Endothelial cell of umbilical vein (primary cell): ENCODE measurements at regions of chr19 and their contacts with region 1.

Region 1: GRCh38 chr19:43950834-43951645 is at the start of gene ZNF221:
- DNase-seq: peak; percentile 98
- H3K4me3 ChIP-seq: peak within 1 kb of the TSS; percentile 49 to 73 (median 55)
- H3K27ac ChIP-seq: peak within 1 kb of the TSS; percentile 4
- H3K4me1 ChIP-seq: no peaks in the 10 kb centered on the region
- H3K27me3 ChIP-seq: no peaks in the 10 kb centered on the region
- CTCF ChIP-seq: peak; percentile 41 to 60
- POLR2A ChIP-seq: no peak
- total RNA-seq, gene ZNF221: 4.2 and 6.0 TPM in 2 replicates

Region 2: GRCh38 chr19:43765109-43765876 is 185.7 kb before region 1 on chr19:
- CTCF ChIA-PET with region 1: interaction called, 3 read pairs
- POLR2A ChIA-PET with region 1: no interaction called
- dilution Hi-C with region 1: no loop called
- intact Hi-C with region 1: loop called (anchors 1 kb)
- DNase-seq: peak; percentile 68
- H3K4me3 ChIP-seq: no peak overlapping the region
- H3K27ac ChIP-seq: peak overlapping the region; percentile 61
- H3K4me1 ChIP-seq: peaks cover 17% of the 10 kb centered on the region
- H3K27me3 ChIP-seq: no peaks in the 10 kb centered on the region
- CTCF ChIP-seq: no peak
- POLR2A ChIP-seq: no peak

Region 3: GRCh38 chr19:43798546-43799409 is 152.3 kb before region 1 on chr19:
- CTCF ChIA-PET with region 1: no interaction called
- POLR2A ChIA-PET with region 1: no interaction called
- dilution Hi-C with region 1: no loop called
- intact Hi-C with region 1: no loop called
- DNase-seq: no peak
- H3K4me3 ChIP-seq: peak overlapping the region in 2 of 3 experiments; percentile 7 to 21
- H3K27ac ChIP-seq: no peak overlapping the region
- H3K4me1 ChIP-seq: peaks cover 13% of the 10 kb centered on the region
- H3K27me3 ChIP-seq: peaks cover 3 to 8% of the 10 kb centered on the region in 2 experiments
- CTCF ChIP-seq: no peak
- POLR2A ChIP-seq: no peak

Region 4: DNA sequence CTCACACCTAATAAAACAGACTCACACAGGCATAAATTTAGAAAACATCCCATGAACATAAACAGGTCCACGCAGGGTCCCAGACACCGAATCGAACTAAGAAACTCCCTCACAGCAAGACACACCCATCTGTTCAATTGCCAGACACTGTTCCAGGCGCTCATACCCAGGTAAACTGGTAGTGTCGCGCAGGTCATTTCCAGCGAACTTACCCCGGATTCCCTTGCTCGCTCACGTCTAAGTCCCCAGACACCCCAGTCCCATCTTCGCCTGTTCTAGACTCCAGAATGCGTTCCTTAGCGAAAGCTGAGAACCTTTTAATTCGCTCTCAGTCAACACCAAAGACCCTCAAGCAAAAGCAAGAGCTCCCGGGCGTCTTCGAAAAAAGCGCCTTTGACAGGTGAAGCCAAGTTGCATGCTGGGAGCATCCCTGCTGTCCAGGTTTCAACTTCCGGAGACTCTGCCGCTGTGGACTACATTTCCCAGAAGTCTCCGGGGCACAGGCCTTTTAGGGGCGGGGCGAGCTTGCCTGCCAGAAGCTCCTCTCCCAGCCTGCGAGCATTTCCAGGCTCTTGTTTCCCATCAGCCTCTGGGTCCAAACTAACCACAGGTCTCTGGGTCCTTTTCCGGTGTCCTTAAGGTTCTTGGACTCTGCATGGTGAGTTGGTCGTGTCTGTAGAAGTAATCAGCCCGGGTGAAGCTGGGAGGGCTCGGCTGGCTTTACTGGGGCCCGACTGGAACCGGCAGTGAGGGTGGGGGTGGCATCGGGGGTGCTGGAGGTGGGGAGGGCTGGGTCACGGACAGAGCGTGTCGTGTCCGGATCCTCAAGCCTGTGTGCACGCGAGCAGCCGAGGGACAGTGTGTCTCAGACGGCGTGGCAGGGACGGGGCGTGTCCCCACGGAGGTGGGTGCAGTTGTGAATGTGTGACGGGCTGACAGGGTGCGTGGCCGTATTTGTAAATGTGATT is 124.0 kb before region 1 on chr19 and contains the start of gene ZNF283:
- CTCF ChIA-PET with region 1: no interaction called
- POLR2A ChIA-PET with region 1: no interaction called
- dilution Hi-C with region 1: no loop called
- intact Hi-C with region 1: no loop called
- DNase-seq: peak; percentile 79
- H3K4me3 ChIP-seq: peak within 1 kb of the TSS; percentile 68 to 94 (median 71)
- H3K27ac ChIP-seq: no peak within 1 kb of the TSS
- H3K4me1 ChIP-seq: peaks cover 4% of the 10 kb centered on the region
- H3K27me3 ChIP-seq: peaks cover 0 to 3% of the 10 kb centered on the region in 2 experiments
- CTCF ChIP-seq: no peak
- POLR2A ChIP-seq: peak; percentile 72
- total RNA-seq, gene ZNF283: 6.0 and 10.7 TPM in 2 replicates

Region 5: GRCh38 chr19:43934985-43935708 is 15.9 kb before region 1 on chr19 and contains the start of gene ZNF45:
- CTCF ChIA-PET with region 1: interaction called, 35 read pairs
- POLR2A ChIA-PET with region 1: interaction called, 8 read pairs
- dilution Hi-C with region 1: no loop called
- intact Hi-C with region 1: loop called (anchors 1 kb)
- DNase-seq: peak; percentile 93
- H3K4me3 ChIP-seq: peak within 1 kb of the TSS; percentile 43 to 94 (median 71)
- H3K27ac ChIP-seq: peak within 1 kb of the TSS; percentile 26
- H3K4me1 ChIP-seq: peaks cover 13% of the 10 kb centered on the region
- H3K27me3 ChIP-seq: no peaks in the 10 kb centered on the region
- CTCF ChIP-seq: no peak
- POLR2A ChIP-seq: peak; percentile 53
- total RNA-seq, gene ZNF45: 10.8 and 11.2 TPM in 2 replicates

Region 6: GRCh38 chr19:44002566-44003460 is 51.8 kb after region 1 on chr19 and contains the start of gene ZNF230:
- CTCF ChIA-PET with region 1: interaction called, 3 read pairs
- POLR2A ChIA-PET with region 1: no interaction called
- dilution Hi-C with region 1: no loop called
- intact Hi-C with region 1: loop called (anchors 1 kb)
- DNase-seq: peak; percentile 96
- H3K4me3 ChIP-seq: peak within 1 kb of the TSS; percentile 59 to 86 (median 84)
- H3K27ac ChIP-seq: peak within 1 kb of the TSS; percentile 36
- H3K4me1 ChIP-seq: peaks cover 6% of the 10 kb centered on the region
- H3K27me3 ChIP-seq: no peaks in the 10 kb centered on the region
- CTCF ChIP-seq: no peak
- POLR2A ChIP-seq: peak; percentile 69
- total RNA-seq, gene ZNF230: 2.9 TPM in 2 replicates

Region 7: GRCh38 chr19:44356383-44357111 is 405.5 kb after region 1 on chr19 and contains the start of gene ZNF112:
- CTCF ChIA-PET with region 1: no interaction called
- POLR2A ChIA-PET with region 1: no interaction called
- dilution Hi-C with region 1: no loop called
- intact Hi-C with region 1: loop called (anchors 1 kb)
- DNase-seq: peak; percentile 93
- H3K4me3 ChIP-seq: peak within 1 kb of the TSS; percentile 41 to 60 (median 58)
- H3K27ac ChIP-seq: no peak within 1 kb of the TSS
- H3K4me1 ChIP-seq: peaks cover 4% of the 10 kb centered on the region
- H3K27me3 ChIP-seq: no peaks in the 10 kb centered on the region
- CTCF ChIP-seq: no peak
- POLR2A ChIP-seq: peak; percentile 56
- total RNA-seq, gene ZNF112: 4.6 and 7.5 TPM in 2 replicates